ENCODE measurements at regions of chr3 and their contacts with region 1.

Region 1: GRCh38 chr3:128910006-128910405 is 30.6 kb downstream of the ACAD9 start:
- DNase-seq: no peak
- ATAC-seq: no peak
- H3K4me3 ChIP-seq: no peak overlapping the region
- H3K4me3 Mint-ChIP-seq: no peak overlapping the region
- H3K27ac ChIP-seq: no peak overlapping the region
- H3K27ac Mint-ChIP-seq: no peak overlapping the region
- H3K4me1 ChIP-seq: no peaks in the 10 kb centered on the region
- H3K4me1 Mint-ChIP-seq: no peaks in the 10 kb centered on the region
- H3K27me3 ChIP-seq: no peaks in the 10 kb centered on the region
- H3K27me3 Mint-ChIP-seq: no peaks in the 10 kb centered on the region
- CTCF ChIP-seq: no peak

Region 2: GRCh38 chr3:128232376-128233178 is 677.4 kb before region 1 on chr3:
- CTCF ChIA-PET with region 1: no interaction called
- POLR2A ChIA-PET with region 1: no interaction called
- intact Hi-C with region 1: loop called in 1 of 2 experiments (anchors 5 kb)
- DNase-seq: no peak
- ATAC-seq: no peak
- H3K4me3 ChIP-seq: no peak overlapping the region
- H3K4me3 Mint-ChIP-seq: no peak overlapping the region
- H3K27ac ChIP-seq: no peak overlapping the region
- H3K27ac Mint-ChIP-seq: no peak overlapping the region
- H3K4me1 ChIP-seq: no peaks in the 10 kb centered on the region
- H3K4me1 Mint-ChIP-seq: peaks cover 21% of the 10 kb centered on the region
- H3K27me3 ChIP-seq: no peaks in the 10 kb centered on the region
- H3K27me3 Mint-ChIP-seq: no peaks in the 10 kb centered on the region
- CTCF ChIP-seq: no peak